ENCODE measurements at regions of chr7 and their contacts with region 1.

Region 1: GRCh38 chr7:2417981-2418481 is 14.6 kb downstream of the CHST12 start:
- DNase-seq: peak; percentile 32 to 85 (median 70)
- H3K4me3 ChIP-seq: no peak overlapping the region
- H3K4me3 Mint-ChIP-seq: peak overlapping the region; percentile 5 to 90 (median 72)
- H3K27ac ChIP-seq: peak overlapping the region; percentile 35
- H3K27ac Mint-ChIP-seq: peak overlapping the region; percentile 71 to 97 (median 90)
- H3K4me1 ChIP-seq: peaks cover 19% of the 10 kb centered on the region
- H3K4me1 Mint-ChIP-seq: peaks cover 47 to 62% (median 52%) of the 10 kb centered on the region in 3 donors
- H3K27me3 ChIP-seq: no peaks in the 10 kb centered on the region
- H3K27me3 Mint-ChIP-seq: no peaks in the 10 kb centered on the region

Region 2: DNA sequence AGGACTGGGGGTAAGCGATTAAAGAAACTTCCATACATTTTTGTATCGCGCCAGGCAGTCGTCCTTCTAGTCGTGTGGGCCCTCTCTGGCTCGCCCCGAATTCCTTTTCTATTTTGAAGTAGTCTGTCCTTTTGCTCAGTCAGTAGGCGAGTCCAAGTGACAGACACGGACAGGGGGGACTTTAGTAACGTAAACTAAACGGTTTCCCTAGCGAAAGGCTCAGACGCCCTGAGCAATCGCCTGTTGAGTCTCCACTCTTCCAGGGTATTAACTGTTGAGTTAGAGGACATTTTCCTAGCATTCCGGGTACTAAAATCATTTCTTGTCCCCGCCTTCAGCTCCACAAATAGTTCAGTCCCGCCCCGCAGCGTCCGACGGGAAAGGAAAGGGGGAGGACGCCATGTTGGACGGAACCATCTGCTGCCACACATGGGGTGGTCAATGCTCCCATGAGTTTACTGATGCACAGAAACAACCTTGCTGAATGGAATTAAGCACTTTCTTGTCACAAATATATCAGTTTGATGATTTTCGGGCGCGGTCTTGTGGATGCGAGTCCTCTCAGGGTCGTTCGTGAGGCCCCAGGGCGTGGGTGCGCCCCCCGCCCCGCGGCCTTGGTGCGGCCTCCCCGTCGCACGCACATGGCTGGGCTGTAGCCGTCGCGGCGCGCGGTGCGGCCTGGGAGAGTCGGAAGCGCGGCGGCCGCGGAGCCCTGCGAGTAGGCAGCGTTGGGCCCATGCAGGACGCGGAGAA is 63.7 kb before region 1 on chr7 and contains the start of gene EIF3B:
- CTCF ChIA-PET with region 1: no interaction called
- POLR2A ChIA-PET with region 1: no interaction called
- DNase-seq: peak; percentile 83 to 94 (median 93)
- H3K4me3 ChIP-seq: peak within 1 kb of the TSS; percentile 84
- H3K4me3 Mint-ChIP-seq: peak within 1 kb of the TSS; percentile 91 to 98 (median 95)
- H3K27ac ChIP-seq: peak within 1 kb of the TSS; percentile 100
- H3K27ac Mint-ChIP-seq: peak within 1 kb of the TSS; percentile 99 to 100 (median 100)
- H3K4me1 ChIP-seq: peaks cover 43% of the 10 kb centered on the region
- H3K4me1 Mint-ChIP-seq: peaks cover 29 to 48% (median 39%) of the 10 kb centered on the region in 3 donors
- H3K27me3 ChIP-seq: no peaks in the 10 kb centered on the region
- H3K27me3 Mint-ChIP-seq: no peaks in the 10 kb centered on the region
- total RNA-seq, gene EIF3B: 284 to 293 TPM

Region 3: GRCh38 chr7:2393706-2394105 is 24.3 kb before region 1 on chr7:
- CTCF ChIA-PET with region 1: no interaction called
- POLR2A ChIA-PET with region 1: no interaction called
- DNase-seq: no peak
- H3K4me3 ChIP-seq: no peak overlapping the region
- H3K4me3 Mint-ChIP-seq: no peak overlapping the region
- H3K27ac ChIP-seq: no peak overlapping the region
- H3K27ac Mint-ChIP-seq: peak overlapping the region in 1 of 8 donors; percentile 41
- H3K4me1 ChIP-seq: no peaks in the 10 kb centered on the region
- H3K4me1 Mint-ChIP-seq: peaks cover 0 to 6% (median 3%) of the 10 kb centered on the region in 3 donors
- H3K27me3 ChIP-seq: no peaks in the 10 kb centered on the region
- H3K27me3 Mint-ChIP-seq: peaks cover 0 to 1% of the 10 kb centered on the region in 2 donors

Region 4: GRCh38 chr7:2405601-2406345 is 12.3 kb before region 1 on chr7:
- CTCF ChIA-PET with region 1: interaction called, 4 read pairs
- POLR2A ChIA-PET with region 1: interaction called, 20 read pairs
- DNase-seq: peak; percentile 29 to 86 (median 62)
- H3K4me3 ChIP-seq: peak overlapping the region; percentile 77
- H3K4me3 Mint-ChIP-seq: peak overlapping the region; percentile 88 to 97 (median 90)
- H3K27ac ChIP-seq: peak overlapping the region; percentile 85
- H3K27ac Mint-ChIP-seq: peak overlapping the region; percentile 87 to 99 (median 94)
- H3K4me1 ChIP-seq: peaks cover 48% of the 10 kb centered on the region
- H3K4me1 Mint-ChIP-seq: peaks cover 61 to 72% (median 70%) of the 10 kb centered on the region in 3 donors
- H3K27me3 ChIP-seq: no peaks in the 10 kb centered on the region
- H3K27me3 Mint-ChIP-seq: peaks cover 0 to 1% of the 10 kb centered on the region in 2 donors

Region 5: DNA sequence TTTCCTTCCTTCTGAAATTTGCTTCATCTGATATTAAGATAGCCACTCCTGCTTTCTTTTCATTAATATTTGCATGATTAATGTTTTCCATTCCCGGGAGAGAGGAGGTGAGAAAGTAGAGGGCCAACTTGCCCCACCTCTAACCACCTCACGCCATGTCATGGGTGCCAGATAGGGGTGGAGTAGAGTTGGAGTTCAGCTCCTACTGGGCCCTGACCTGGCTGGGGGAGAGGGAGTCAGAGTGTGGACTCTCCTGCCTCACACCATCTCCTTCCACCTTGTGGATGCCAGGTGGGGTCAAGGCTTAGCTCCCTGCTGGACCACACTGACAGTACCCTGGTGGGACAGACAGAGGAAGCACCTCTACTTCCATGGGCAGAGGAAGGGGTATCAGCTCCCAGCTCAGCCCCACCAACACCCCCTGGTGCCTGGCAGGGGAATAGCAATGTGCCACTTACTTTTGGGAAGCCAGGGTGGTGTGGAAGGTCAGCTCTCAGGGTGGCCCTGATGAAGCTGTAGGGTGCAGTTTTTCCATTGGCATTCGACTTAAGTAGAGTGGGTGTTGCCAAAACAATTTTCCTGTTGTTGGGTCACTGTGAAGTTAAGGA is 13.3 kb after region 1 on chr7:
- CTCF ChIA-PET with region 1: interaction called, 14 read pairs
- POLR2A ChIA-PET with region 1: no interaction called
- DNase-seq: peak in 4 of 5 donors; percentile 37 to 68 (median 42)
- H3K4me3 ChIP-seq: no peak overlapping the region
- H3K4me3 Mint-ChIP-seq: no peak overlapping the region
- H3K27ac ChIP-seq: no peak overlapping the region
- H3K27ac Mint-ChIP-seq: peak overlapping the region in 6 of 8 donors; percentile 0 to 67 (median 36)
- H3K4me1 ChIP-seq: no peaks in the 10 kb centered on the region
- H3K4me1 Mint-ChIP-seq: peaks cover 26 to 46% (median 39%) of the 10 kb centered on the region in 3 donors
- H3K27me3 ChIP-seq: no peaks in the 10 kb centered on the region
- H3K27me3 Mint-ChIP-seq: no peaks in the 10 kb centered on the region

Region 6: GRCh38 chr7:2465928-2466327 is 47.9 kb after region 1 on chr7:
- CTCF ChIA-PET with region 1: interaction called, 10 read pairs
- POLR2A ChIA-PET with region 1: no interaction called
- DNase-seq: no peak
- H3K4me3 ChIP-seq: no peak overlapping the region
- H3K4me3 Mint-ChIP-seq: no peak overlapping the region
- H3K27ac ChIP-seq: no peak overlapping the region
- H3K27ac Mint-ChIP-seq: no peak overlapping the region
- H3K4me1 ChIP-seq: no peaks in the 10 kb centered on the region
- H3K4me1 Mint-ChIP-seq: peaks cover 2 to 5% (median 4%) of the 10 kb centered on the region in 3 donors
- H3K27me3 ChIP-seq: no peaks in the 10 kb centered on the region
- H3K27me3 Mint-ChIP-seq: peaks cover 3 to 6% of the 10 kb centered on the region in 2 donors

Region 7: DNA sequence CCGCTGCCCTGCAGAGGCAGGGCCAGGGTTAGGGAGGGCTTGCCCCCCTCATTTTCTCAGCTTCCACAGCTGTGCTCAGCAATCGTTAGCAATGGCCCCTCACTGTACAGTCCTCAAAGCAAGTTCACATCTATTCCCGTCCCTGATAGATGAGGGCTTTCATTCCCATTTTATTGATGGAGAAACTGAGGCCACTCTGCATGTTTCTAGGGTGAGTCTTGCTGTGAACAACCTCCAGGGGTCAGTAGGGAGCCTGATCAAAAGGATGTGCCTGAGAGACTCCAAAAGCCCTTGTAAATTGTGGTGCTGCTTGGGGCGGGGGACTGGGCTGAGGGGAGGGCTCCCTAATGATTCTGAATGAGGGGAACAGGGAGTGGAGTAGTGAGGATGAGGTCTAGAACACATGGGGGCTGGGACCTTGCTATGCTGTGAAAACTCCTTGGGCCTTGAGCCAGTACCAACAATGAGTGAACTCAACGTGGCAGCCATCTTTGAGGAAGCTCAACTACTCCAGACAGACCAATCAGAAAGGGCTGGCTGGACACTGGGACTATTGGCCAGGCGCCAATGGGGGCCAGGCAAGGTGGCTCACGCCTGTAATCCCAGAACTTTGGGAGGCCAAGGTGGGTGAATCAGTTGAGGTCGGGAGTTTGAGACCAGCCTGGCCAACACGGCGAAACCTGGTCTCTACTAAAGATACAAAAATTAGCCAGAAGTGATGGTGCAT is 64.9 kb after region 1 on chr7:
- CTCF ChIA-PET with region 1: no interaction called
- POLR2A ChIA-PET with region 1: no interaction called
- DNase-seq: no peak
- H3K4me3 ChIP-seq: no peak overlapping the region
- H3K4me3 Mint-ChIP-seq: no peak overlapping the region
- H3K27ac ChIP-seq: no peak overlapping the region
- H3K27ac Mint-ChIP-seq: no peak overlapping the region
- H3K4me1 ChIP-seq: peaks cover 3% of the 10 kb centered on the region
- H3K4me1 Mint-ChIP-seq: peaks cover 0 to 3% (median 0%) of the 10 kb centered on the region in 3 donors
- H3K27me3 ChIP-seq: no peaks in the 10 kb centered on the region
- H3K27me3 Mint-ChIP-seq: peaks cover 0 to 4% of the 10 kb centered on the region in 2 donors